HAP-1 (cell line): ENCODE measurements at regions of chr19 and their contacts with region 1.

Region 1: DNA sequence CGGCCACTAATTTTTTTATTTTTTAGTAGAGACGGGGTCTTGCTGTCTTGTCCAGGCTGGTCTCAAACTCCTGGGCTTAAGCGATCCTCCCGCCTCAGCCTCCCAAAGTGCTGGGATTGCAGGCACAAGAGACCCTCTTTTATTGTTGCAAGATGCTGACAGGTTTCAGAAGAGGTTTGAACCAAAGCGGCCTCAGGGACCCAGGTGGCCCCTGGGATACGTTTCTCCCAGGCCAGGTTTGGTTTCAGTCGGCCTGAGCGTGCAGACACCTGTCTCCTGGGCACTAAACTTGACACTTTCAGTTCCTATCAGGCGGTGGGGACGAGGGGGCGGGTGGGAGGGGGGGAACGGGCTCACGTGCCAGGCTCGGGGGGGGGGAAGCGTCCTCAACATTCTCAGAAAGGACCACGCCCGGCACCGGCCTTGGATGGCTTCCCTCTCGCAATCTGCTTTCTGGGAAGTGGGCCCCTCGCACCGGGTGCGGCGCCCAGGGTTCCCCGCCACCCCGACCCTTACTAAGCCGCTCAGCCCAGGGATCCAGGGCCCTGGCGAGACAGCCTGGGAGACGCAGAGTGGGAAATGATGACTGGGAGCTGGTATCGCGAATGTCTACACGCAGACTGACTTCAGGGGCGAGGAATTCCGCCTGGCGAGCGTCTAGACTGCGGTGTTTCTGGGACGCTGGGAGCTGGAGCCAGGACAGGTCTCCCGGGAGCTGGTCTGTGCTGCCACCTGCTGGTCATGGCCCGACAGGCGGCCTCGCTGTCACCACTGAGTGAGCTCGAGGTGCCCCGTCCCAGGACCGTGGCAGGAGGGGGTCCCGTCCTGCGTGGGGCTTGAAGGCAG is 91.6 kb downstream of the GNG7 start:
- DNase-seq: peak; percentile 85 to 96
- H3K4me3 ChIP-seq: peak overlapping the region; percentile 23
- H3K4me1 ChIP-seq: 0 out of 2 replicates have a peak, but pooled peaks cover 2% of the 10 kb centered on the region
- H3K27me3 ChIP-seq: no peaks in the 10 kb centered on the region

Region 2: DNA sequence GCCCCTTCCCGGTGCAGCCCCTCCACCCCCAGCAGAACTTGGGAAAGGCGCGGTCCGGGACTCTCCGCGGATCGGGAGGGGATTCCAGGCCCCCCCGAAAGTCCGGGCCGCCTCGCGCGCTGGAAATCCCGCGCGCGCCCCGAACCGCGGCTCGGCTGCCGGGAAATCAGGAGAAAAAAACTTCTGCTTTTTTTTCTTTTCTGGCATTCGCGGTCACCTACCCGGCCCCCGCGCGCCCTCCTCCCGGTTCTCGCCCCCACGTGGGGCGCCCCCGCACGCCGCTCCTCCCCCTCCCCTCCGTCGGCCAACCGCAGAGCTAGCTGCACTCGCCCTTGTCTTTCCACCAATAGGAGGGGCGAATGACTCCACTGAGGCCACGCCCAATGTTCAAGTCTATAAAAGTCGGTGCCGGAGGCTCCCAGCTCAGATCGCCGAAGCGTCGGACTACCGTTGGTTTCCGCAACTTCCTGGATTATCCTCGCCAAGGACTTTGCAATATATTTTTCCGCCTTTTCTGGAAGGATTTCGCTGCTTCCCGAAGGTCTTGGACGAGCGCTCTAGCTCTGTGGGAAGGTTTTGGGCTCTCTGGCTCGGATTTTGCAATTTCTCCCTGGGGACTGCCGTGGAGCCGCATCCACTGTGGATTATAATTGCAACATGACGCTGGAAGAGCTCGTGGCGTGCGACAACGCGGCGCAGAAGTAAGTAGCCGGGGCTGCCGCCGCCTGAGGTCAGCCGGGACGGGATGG is 135.0 kb before region 1 on chr19 and contains the start of gene GADD45B:
- in situ Hi-C with region 1: loop called (anchors 5 kb)
- DNase-seq: peak; percentile 94 to 99
- H3K4me3 ChIP-seq: peak within 1 kb of the TSS; percentile 100
- H3K4me1 ChIP-seq: peaks cover 11% of the 10 kb centered on the region
- H3K27me3 ChIP-seq: no peaks in the 10 kb centered on the region

Region 3: GRCh38 chr19:2739602-2740313 is 128.9 kb after region 1 on chr19 and contains the start of gene SLC39A3:
- in situ Hi-C with region 1: no loop called
- DNase-seq: peak; percentile 92 to 100
- H3K4me3 ChIP-seq: peak within 1 kb of the TSS; percentile 65
- H3K4me1 ChIP-seq: no peaks in the 10 kb centered on the region
- H3K27me3 ChIP-seq: no peaks in the 10 kb centered on the region